Activated T-helper 1 cell treated with anti-CD3 and anti-CD28 coated beads, Interleukin-12 subunit alpha, Interleukin-12 subunit beta, Interleukin-2, Interleukin-4 antibody, amounts not matched to agents 30 ng/mL and 10 ng/mL and 1 ng/mL, durations not matched to agents 14 hours and 24 hours and 36 hours (primary cell): ENCODE measurements at regions of chr5 and their contacts with region 1.

Region 1: GRCh38 chr5:83473346-83474163 is 2.0 kb downstream of the VCAN start:
- DNase-seq: peak; percentile 45
- H3K4me3 Mint-ChIP-seq: peak overlapping the region; percentile 86
- H3K27ac Mint-ChIP-seq: peak overlapping the region; percentile 78
- H3K4me1 Mint-ChIP-seq: peaks cover 33% of the 10 kb centered on the region
- H3K27me3 Mint-ChIP-seq: peaks cover 72% of the 10 kb centered on the region

Region 2: GRCh38 chr5:82278095-82278918 is 1195.2 kb before region 1 on chr5 and contains the start of gene RPS23:
- intact Hi-C with region 1: loop called (anchors 5 kb)
- DNase-seq: peak; percentile 81
- H3K4me3 Mint-ChIP-seq: peak within 1 kb of the TSS; percentile 92
- H3K27ac Mint-ChIP-seq: peak within 1 kb of the TSS; percentile 96
- H3K4me1 Mint-ChIP-seq: peaks cover 34% of the 10 kb centered on the region
- H3K27me3 Mint-ChIP-seq: no peaks in the 10 kb centered on the region
- total RNA-seq, gene RPS23: 2,220 and 2,235 TPM in 2 replicates

Region 3: GRCh38 chr5:83076742-83077661 is 396.6 kb before region 1 on chr5 and contains the starts of genes TMEM167A and XRCC4:
- intact Hi-C with region 1: loop called (anchors 2 kb)
- DNase-seq: peak; percentile 93
- H3K4me3 Mint-ChIP-seq: peak within 1 kb of the TSS; percentile 100
- H3K27ac Mint-ChIP-seq: peak within 1 kb of the TSS; percentile 99
- H3K4me1 Mint-ChIP-seq: peaks cover 43% of the 10 kb centered on the region
- H3K27me3 Mint-ChIP-seq: no peaks in the 10 kb centered on the region
- total RNA-seq, gene TMEM167A: 84.6 and 96.2 TPM in 2 replicates
- total RNA-seq, gene XRCC4: 10.2 and 11.2 TPM in 2 replicates

Region 4: GRCh38 chr5:83564069-83564749 is 90.7 kb after region 1 on chr5:
- intact Hi-C with region 1: loop called (anchors 2 kb)
- DNase-seq: no peak
- H3K4me3 Mint-ChIP-seq: no peak overlapping the region
- H3K27ac Mint-ChIP-seq: no peak overlapping the region
- H3K4me1 Mint-ChIP-seq: no peaks in the 10 kb centered on the region
- H3K27me3 Mint-ChIP-seq: peaks cover 20% of the 10 kb centered on the region